ENCODE measurements at regions of chr5 and their contacts with region 1.

Region 1: GRCh38 chr5:127306036-127306435 is 15.4 kb downstream of the MEGF10 start:
- DNase-seq: no peak
- ATAC-seq: no peak
- H3K4me3 ChIP-seq: no peak overlapping the region
- H3K4me3 Mint-ChIP-seq: no peak overlapping the region
- H3K27ac ChIP-seq: no peak overlapping the region
- H3K27ac Mint-ChIP-seq: no peak overlapping the region
- H3K4me1 ChIP-seq: no peaks in the 10 kb centered on the region
- H3K4me1 Mint-ChIP-seq: no peaks in the 10 kb centered on the region
- H3K27me3 ChIP-seq: no peaks in the 10 kb centered on the region
- H3K27me3 Mint-ChIP-seq: peaks cover 12% of the 10 kb centered on the region in 2 donors

Region 2: DNA sequence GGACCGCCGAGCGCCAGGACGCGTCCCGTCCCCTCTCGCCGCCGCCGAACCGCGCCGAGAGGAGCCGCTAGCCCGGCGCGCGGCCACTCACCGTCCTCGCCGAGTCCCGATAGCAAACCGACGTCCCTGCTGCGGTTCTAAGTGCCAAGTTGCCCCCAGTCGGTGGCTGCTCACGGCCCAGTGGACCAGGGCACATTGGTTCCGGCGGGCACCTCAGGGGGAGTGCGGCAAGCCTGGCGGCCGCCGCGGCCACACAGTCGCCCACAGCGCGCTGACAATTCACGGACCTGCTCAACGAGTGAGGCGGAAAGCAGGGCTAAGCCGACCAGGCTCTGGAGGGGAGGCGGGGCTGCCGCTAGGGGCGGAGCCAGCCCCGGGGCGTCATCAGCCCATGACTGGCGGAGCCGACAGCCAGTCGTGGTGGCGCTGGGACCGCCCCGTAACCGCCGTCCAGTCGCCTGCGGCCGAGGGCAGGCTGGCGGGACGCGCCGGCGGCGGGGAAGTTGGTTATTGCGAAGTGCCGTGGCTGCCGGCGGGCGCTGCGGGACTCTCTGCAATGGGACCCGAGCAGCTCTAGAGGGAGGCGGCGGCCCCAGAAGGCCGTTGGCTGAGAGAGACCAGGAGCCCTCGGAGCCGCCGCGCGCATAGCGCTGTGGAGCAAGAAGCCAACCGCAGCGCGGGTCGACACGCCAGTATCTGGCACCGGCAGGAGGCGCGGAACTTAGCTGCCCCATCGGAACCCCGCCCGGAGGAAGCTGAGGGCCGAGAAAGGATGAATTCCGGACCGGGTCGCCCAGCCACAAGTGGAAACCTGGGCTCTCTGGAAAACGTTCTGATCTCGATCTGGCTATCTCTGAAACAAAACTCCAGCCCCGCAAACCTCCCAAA is 275.5 kb before region 1 on chr5 and contains the start of gene MARCHF3:
- CTCF ChIA-PET with region 1: interaction called in 1 of 2 experiments, 10 read pairs
- POLR2A ChIA-PET with region 1: no interaction called
- DNase-seq: peak; percentile 83 to 96 (median 91)
- ATAC-seq: peak; percentile 97 to 98 (median 97)
- H3K4me3 ChIP-seq: peak within 1 kb of the TSS; percentile 90 to 95
- H3K4me3 Mint-ChIP-seq: peak within 1 kb of the TSS; percentile 90
- H3K27ac ChIP-seq: no peak within 1 kb of the TSS
- H3K27ac Mint-ChIP-seq: peak within 1 kb of the TSS in 1 of 2 donors; percentile 81
- H3K4me1 ChIP-seq: peaks cover 5 to 24% of the 10 kb centered on the region in 2 experiments
- H3K4me1 Mint-ChIP-seq: peaks cover 19 to 35% (median 23%) of the 10 kb centered on the region in 3 donors
- H3K27me3 ChIP-seq: peaks cover 0 to 26% of the 10 kb centered on the region in 2 experiments
- H3K27me3 Mint-ChIP-seq: peaks cover 0 to 8% of the 10 kb centered on the region in 2 donors
- total RNA-seq, gene MARCHF3: 5.6 to 9.9 (median 7.6) TPM

Region 3: GRCh38 chr5:127326428-127326827 is 20.4 kb after region 1 on chr5:
- CTCF ChIA-PET with region 1: no interaction called
- POLR2A ChIA-PET with region 1: no interaction called
- DNase-seq: no peak
- ATAC-seq: no peak
- H3K4me3 ChIP-seq: no peak overlapping the region
- H3K4me3 Mint-ChIP-seq: no peak overlapping the region
- H3K27ac ChIP-seq: no peak overlapping the region
- H3K27ac Mint-ChIP-seq: no peak overlapping the region
- H3K4me1 ChIP-seq: no peaks in the 10 kb centered on the region
- H3K4me1 Mint-ChIP-seq: peaks cover 0 to 4% (median 1%) of the 10 kb centered on the region in 3 donors
- H3K27me3 ChIP-seq: peaks cover 0 to 6% of the 10 kb centered on the region in 2 experiments
- H3K27me3 Mint-ChIP-seq: peaks cover 10 to 23% of the 10 kb centered on the region in 2 donors

Region 4: DNA sequence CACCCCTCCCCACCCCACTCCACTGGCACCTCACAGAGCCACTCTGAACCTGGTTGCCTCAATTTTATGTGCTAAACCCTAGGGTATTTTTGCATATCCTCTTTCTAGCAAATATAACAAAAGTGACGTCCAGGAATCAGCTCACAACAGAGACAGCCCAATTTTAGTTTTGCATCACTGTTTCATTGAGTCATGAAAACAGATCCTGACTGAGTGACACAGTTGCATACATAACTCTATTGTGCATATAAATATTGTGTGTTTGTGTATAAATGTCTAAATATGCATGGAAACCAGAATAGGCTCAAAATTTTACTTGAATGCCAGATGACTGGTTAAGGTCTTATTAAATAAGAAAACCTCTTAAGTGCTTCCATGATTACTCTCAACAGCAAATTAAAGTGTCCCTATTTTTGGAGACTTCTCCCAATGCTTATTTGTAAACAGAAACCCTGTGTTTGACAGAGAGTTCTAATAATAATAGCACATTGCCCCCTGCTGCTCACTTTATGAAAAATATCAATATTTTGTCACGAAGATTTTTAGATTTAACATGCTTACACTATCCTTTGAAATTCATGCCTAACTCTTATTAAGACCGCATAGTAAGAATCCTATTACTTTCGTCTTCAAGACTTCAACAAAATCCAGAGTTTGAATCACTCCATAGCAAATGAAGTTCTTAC is 135.9 kb after region 1 on chr5:
- CTCF ChIA-PET with region 1: no interaction called
- POLR2A ChIA-PET with region 1: no interaction called
- DNase-seq: no peak
- ATAC-seq: no peak
- H3K4me3 ChIP-seq: no peak overlapping the region
- H3K4me3 Mint-ChIP-seq: no peak overlapping the region
- H3K27ac ChIP-seq: no peak overlapping the region
- H3K27ac Mint-ChIP-seq: no peak overlapping the region
- H3K4me1 ChIP-seq: no peaks in the 10 kb centered on the region
- H3K4me1 Mint-ChIP-seq: no peaks in the 10 kb centered on the region
- H3K27me3 ChIP-seq: no peaks in the 10 kb centered on the region
- H3K27me3 Mint-ChIP-seq: peaks cover 9 to 17% of the 10 kb centered on the region in 2 donors

Region 5: GRCh38 chr5:127634007-127634406 is 328.0 kb after region 1 on chr5:
- CTCF ChIA-PET with region 1: no interaction called
- POLR2A ChIA-PET with region 1: no interaction called
- DNase-seq: no peak
- ATAC-seq: no peak
- H3K4me3 ChIP-seq: no peak overlapping the region
- H3K4me3 Mint-ChIP-seq: no peak overlapping the region
- H3K27ac ChIP-seq: no peak overlapping the region
- H3K27ac Mint-ChIP-seq: no peak overlapping the region
- H3K4me1 ChIP-seq: no peaks in the 10 kb centered on the region
- H3K4me1 Mint-ChIP-seq: no peaks in the 10 kb centered on the region
- H3K27me3 ChIP-seq: peaks cover 0 to 3% of the 10 kb centered on the region in 2 experiments
- H3K27me3 Mint-ChIP-seq: peaks cover 7 to 10% of the 10 kb centered on the region in 2 donors

Region 6: DNA sequence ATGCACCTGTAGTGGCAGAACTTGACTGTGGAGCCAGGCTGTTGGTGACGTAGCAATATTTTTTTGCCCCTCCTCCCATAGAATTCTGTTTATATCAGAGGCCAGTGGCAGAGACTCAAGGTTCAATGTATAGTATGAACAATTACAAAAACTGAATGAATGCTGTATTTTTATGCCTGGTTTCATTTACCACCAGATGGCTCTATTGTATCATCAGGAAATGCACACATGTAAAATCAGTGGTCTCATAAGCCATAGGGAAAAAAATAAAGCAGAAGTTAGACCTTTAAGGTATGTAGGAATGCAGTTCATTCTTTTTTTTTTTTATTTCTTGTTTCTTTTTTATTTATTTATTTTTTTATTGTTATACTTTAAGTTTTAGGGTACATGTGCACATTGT is 440.7 kb after region 1 on chr5:
- CTCF ChIA-PET with region 1: no interaction called
- POLR2A ChIA-PET with region 1: no interaction called
- DNase-seq: peak in 1 of 35 experiments; percentile 31
- ATAC-seq: no peak
- H3K4me3 ChIP-seq: no peak overlapping the region
- H3K4me3 Mint-ChIP-seq: no peak overlapping the region
- H3K27ac ChIP-seq: no peak overlapping the region
- H3K27ac Mint-ChIP-seq: no peak overlapping the region
- H3K4me1 ChIP-seq: no peaks in the 10 kb centered on the region
- H3K4me1 Mint-ChIP-seq: no peaks in the 10 kb centered on the region
- H3K27me3 ChIP-seq: no peaks in the 10 kb centered on the region
- H3K27me3 Mint-ChIP-seq: peaks cover 7% of the 10 kb centered on the region in 2 donors